ENCODE measurements at regions of chr3 and their contacts with region 1.

Region 1: GRCh38 chr3:112973325-112974177 is 1.4 kb downstream of the CD200R1 start:
- DNase-seq: peak; percentile 86
- H3K4me3 Mint-ChIP-seq: peak overlapping the region; percentile 85
- H3K27ac Mint-ChIP-seq: peak overlapping the region; percentile 93
- H3K4me1 Mint-ChIP-seq: peaks cover 67% of the 10 kb centered on the region
- H3K27me3 Mint-ChIP-seq: no peaks in the 10 kb centered on the region

Region 2: DNA sequence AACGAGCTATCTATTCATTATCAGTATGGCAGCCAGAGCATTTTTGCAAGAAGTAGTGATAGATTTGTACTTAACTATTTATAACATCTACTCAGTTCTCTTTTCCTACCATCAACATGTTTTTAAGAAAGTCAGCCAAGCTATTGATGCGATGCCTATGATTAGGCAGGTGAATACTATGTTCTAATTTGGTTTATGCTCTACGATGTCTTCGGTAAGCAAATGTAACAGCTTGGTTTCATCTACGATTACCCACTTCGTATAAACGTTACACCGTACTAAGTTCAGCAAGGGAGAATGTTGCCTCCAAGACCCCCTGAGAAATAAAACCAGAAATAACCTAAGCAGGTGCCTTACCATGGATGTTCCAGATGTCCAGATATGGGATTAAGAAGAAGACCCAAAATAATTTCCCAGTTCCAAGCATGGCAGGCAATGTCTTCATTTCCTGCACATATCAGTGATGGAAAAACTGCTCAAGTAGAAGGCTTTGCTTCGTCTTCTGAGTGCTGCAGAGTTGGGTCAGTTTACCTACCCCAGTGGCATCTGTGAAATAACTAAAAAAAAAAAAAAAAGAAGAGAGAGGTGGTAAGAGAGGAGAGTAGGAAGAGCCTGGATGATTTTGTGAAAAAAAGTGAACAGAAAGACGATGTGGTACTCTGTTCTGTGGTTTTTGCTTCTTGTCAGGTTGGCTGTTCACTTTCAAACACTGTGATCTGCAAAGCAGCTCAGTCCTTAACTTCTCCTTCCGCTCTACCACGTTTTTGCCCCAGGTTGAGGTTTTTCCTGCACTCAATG is 474.4 kb before region 1 on chr3 and contains the start of gene BTLA:
- intact Hi-C with region 1: loop called (anchors 5 kb)
- DNase-seq: peak; percentile 81
- H3K4me3 Mint-ChIP-seq: peak within 1 kb of the TSS; percentile 97
- H3K27ac Mint-ChIP-seq: peak within 1 kb of the TSS; percentile 94
- H3K4me1 Mint-ChIP-seq: peaks cover 50% of the 10 kb centered on the region
- H3K27me3 Mint-ChIP-seq: no peaks in the 10 kb centered on the region
- total RNA-seq, gene BTLA: 33.7 and 36.0 TPM in 2 replicates

Region 3: DNA sequence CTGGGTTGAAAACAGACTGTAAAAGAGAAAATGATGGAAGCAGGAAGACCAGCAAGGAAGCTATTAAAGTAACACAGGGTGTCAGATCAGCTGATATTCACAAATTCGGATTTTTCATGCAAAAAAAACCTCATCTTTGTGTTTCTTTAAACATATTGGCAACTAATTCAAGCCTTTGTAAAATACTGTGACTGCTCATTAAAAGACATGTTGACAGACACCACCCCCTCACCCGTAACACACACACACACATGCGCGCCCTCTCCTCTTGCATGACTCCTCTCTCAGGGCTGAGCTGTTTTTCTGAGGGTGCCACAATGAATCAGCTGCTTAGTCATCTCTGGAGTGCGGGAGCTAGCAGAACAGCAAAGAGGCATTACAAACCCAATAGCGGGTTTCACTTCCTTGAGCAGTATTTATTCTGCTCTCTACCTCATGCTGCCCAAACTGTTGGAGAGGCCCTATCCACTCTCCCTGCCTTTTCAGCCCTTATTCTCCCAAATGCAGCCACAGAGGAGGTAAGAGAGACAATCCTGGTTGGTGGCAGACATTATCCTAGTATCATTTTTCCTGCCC is 296.8 kb before region 1 on chr3:
- intact Hi-C with region 1: loop called (anchors 1 kb)
- DNase-seq: peak; percentile 96
- H3K4me3 Mint-ChIP-seq: peak overlapping the region; percentile 60
- H3K27ac Mint-ChIP-seq: peak overlapping the region; percentile 90
- H3K4me1 Mint-ChIP-seq: peaks cover 62% of the 10 kb centered on the region
- H3K27me3 Mint-ChIP-seq: peaks cover 2% of the 10 kb centered on the region

Region 4: GRCh38 chr3:112958811-112959560 is 14.6 kb before region 1 on chr3:
- intact Hi-C with region 1: loop called (anchors 1 kb)
- DNase-seq: no peak
- H3K4me3 Mint-ChIP-seq: peak overlapping the region; percentile 61
- H3K27ac Mint-ChIP-seq: peak overlapping the region; percentile 50
- H3K4me1 Mint-ChIP-seq: peaks cover 15% of the 10 kb centered on the region
- H3K27me3 Mint-ChIP-seq: no peaks in the 10 kb centered on the region

Region 5: DNA sequence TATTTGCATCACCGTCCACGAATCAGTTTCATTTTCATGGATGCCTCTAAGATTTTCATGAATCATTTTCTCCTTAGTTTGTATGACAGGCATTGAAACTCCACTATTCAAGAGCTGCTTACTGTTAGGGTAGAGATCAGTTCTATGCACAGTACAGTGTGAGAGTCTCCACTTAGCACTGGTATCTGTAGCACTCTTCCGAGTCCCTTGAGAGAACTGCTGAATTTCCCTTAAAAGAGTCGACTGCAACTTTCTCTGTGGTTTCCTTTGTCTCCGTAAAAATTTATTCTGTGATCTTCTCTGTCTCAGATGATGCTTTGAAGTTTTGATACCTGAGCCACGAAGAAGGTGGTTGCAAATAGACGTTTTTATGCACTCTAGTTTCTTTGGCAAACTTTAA is 32.1 kb after region 1 on chr3:
- intact Hi-C with region 1: loop called (anchors 1 kb)
- DNase-seq: peak; percentile 77
- H3K4me3 Mint-ChIP-seq: peak overlapping the region; percentile 77
- H3K27ac Mint-ChIP-seq: peak overlapping the region; percentile 88
- H3K4me1 Mint-ChIP-seq: peaks cover 56% of the 10 kb centered on the region
- H3K27me3 Mint-ChIP-seq: no peaks in the 10 kb centered on the region

Region 6: GRCh38 chr3:113128386-113129015 is 154.9 kb after region 1 on chr3:
- intact Hi-C with region 1: no loop called
- DNase-seq: no peak
- H3K4me3 Mint-ChIP-seq: no peak overlapping the region
- H3K27ac Mint-ChIP-seq: no peak overlapping the region
- H3K4me1 Mint-ChIP-seq: peaks cover 2% of the 10 kb centered on the region
- H3K27me3 Mint-ChIP-seq: no peaks in the 10 kb centered on the region

Measured in activated CD4-positive, alpha-beta T cell treated with anti-CD3 and anti-CD28 coated beads, Interleukin-2, amount 10 ng/mL, durations not matched to agents 24 days and 14 days (primary cell).